Naive thymus-derived CD4-positive, alpha-beta T cell (primary cell): ENCODE measurements at regions of chr9 and their contacts with region 1.

Region 1: DNA sequence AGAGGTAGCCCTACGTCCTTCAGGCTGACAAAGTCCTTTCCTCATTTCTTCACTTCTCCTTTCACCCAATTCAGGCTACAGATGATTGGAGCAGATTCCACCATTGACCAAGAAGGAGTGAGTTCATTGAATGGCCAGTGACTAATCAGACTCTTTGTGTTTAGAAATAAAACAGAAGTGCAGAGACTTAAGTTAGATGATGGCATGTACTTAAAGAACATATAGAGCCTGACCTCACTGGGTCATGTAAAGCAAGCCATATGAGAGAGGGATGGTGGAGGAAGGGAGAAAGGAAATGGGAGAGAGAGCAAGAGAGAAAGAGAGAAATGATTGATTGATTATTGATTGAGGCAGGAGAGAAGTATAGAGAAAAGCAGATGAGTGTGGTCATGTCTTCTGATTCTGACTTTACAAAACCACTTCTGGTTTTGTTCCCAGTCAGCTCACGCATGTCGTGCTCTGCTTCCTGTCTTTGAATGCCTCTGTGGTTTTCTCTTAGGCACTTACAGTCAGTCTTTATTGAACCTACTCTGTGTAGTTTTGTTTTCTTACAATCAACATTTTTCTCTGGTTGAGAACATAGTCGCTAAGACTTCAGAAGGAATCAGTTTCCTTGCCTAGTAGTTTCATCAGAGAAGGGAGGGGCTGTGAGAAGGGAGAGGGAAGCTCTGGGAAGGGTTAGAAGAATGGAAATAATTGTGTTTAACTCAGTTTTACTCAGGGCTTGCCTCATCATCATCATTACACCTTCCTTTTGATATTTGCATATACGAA is 149.2 kb upstream of the KLF9 start:
- DNase-seq: peak in 8 of 9 donors; percentile 45 to 86 (median 78)
- ATAC-seq: peak; percentile 93
- H3K4me3 ChIP-seq: peak overlapping the region; percentile 15
- H3K4me3 Mint-ChIP-seq: peak overlapping the region; percentile 45 to 85 (median 68)
- H3K27ac ChIP-seq: peak overlapping the region; percentile 67
- H3K27ac Mint-ChIP-seq: peak overlapping the region; percentile 85 to 98 (median 95)
- H3K4me1 ChIP-seq: peaks cover 17 to 34% of the 10 kb centered on the region in 2 donors
- H3K4me1 Mint-ChIP-seq: peaks cover 33 to 66% (median 53%) of the 10 kb centered on the region in 7 donors
- H3K27me3 ChIP-seq: no peaks in the 10 kb centered on the region
- H3K27me3 Mint-ChIP-seq: no peaks in the 10 kb centered on the region

Region 2: GRCh38 chr9:70340572-70340971 is 223.0 kb before region 1 on chr9:
- CTCF ChIA-PET with region 1: interaction called, 3 read pairs
- POLR2A ChIA-PET with region 1: interaction called, 3 read pairs
- intact Hi-C with region 1: loop called (anchors 1 kb)
- DNase-seq: peak in 5 of 9 donors; percentile 8 to 36 (median 24)
- ATAC-seq: no peak
- H3K4me3 ChIP-seq: no peak overlapping the region
- H3K4me3 Mint-ChIP-seq: no peak overlapping the region
- H3K27ac ChIP-seq: no peak overlapping the region
- H3K27ac Mint-ChIP-seq: no peak overlapping the region
- H3K4me1 ChIP-seq: no peaks in the 10 kb centered on the region
- H3K4me1 Mint-ChIP-seq: peaks cover 0 to 12% (median 4%) of the 10 kb centered on the region in 7 donors
- H3K27me3 ChIP-seq: no peaks in the 10 kb centered on the region
- H3K27me3 Mint-ChIP-seq: no peaks in the 10 kb centered on the region

Region 3: GRCh38 chr9:70419546-70420266 is 143.9 kb before region 1 on chr9:
- CTCF ChIA-PET with region 1: interaction called, 3 read pairs
- POLR2A ChIA-PET with region 1: interaction called, 45 read pairs
- intact Hi-C with region 1: loop called (anchors 1 kb)
- DNase-seq: peak; percentile 69 to 92 (median 83)
- ATAC-seq: peak; percentile 69
- H3K4me3 ChIP-seq: peak overlapping the region; percentile 69
- H3K4me3 Mint-ChIP-seq: peak overlapping the region; percentile 87 to 99 (median 95)
- H3K27ac ChIP-seq: peak overlapping the region; percentile 92
- H3K27ac Mint-ChIP-seq: peak overlapping the region; percentile 75 to 100 (median 99)
- H3K4me1 ChIP-seq: peaks cover 38 to 43% of the 10 kb centered on the region in 2 donors
- H3K4me1 Mint-ChIP-seq: peaks cover 22 to 66% (median 42%) of the 10 kb centered on the region in 7 donors
- H3K27me3 ChIP-seq: no peaks in the 10 kb centered on the region
- H3K27me3 Mint-ChIP-seq: peaks cover 0 to 2% (median 0%) of the 10 kb centered on the region in 5 donors

Region 4: DNA sequence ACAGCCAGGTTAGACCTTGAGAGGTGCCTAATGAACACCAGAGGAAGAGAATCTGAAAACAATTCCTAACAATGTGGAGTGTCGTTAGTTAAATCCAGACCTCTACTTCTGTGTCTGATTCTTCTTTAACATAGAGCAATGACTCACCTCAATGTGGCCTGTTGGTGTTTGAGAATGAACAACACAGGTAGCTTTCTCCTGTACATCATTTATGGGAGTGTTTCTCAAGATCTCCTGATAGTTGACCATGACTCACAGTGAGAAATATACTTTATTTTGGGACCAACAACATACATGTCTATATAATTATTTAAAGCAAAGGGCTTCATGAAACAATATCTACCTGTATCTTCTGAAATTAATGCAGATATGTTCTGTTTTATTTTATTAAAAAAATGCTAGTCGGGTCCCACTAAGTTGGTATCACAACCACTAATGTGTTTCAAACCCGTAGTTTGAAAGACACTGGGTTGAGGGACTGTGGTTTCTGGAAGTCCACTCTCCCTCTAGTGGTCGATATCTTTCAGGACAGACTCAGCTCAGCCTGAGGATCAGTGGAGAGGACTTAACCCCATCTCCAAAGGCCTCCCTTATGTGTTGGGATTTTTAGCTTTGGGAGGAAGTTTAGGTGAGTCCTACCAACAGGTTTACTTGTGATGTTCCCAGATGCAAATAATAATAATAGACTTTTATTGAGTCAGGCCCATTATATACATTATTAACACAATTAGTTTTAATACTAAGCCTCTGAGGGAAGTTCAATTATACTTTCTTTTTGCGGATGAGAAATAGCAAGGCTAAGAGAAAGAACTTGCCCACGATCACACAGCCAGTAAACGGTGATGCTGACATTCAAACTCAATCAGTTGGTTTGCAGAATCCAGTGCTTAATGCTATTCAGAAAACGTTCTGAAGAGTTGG is 79.1 kb before region 1 on chr9:
- CTCF ChIA-PET with region 1: no interaction called
- POLR2A ChIA-PET with region 1: no interaction called
- intact Hi-C with region 1: loop called in 1 of 2 experiments (anchors 2 kb)
- DNase-seq: peak in 6 of 9 donors; percentile 13 to 38 (median 32)
- ATAC-seq: peak; percentile 85
- H3K4me3 ChIP-seq: no peak overlapping the region
- H3K4me3 Mint-ChIP-seq: no peak overlapping the region
- H3K27ac ChIP-seq: no peak overlapping the region
- H3K27ac Mint-ChIP-seq: peak overlapping the region in 1 of 9 donors; percentile 36
- H3K4me1 ChIP-seq: no peaks in the 10 kb centered on the region
- H3K4me1 Mint-ChIP-seq: peaks cover 4 to 26% (median 13%) of the 10 kb centered on the region in 7 donors
- H3K27me3 ChIP-seq: no peaks in the 10 kb centered on the region
- H3K27me3 Mint-ChIP-seq: peaks cover 0 to 10% (median 0%) of the 10 kb centered on the region in 5 donors

Region 5: DNA sequence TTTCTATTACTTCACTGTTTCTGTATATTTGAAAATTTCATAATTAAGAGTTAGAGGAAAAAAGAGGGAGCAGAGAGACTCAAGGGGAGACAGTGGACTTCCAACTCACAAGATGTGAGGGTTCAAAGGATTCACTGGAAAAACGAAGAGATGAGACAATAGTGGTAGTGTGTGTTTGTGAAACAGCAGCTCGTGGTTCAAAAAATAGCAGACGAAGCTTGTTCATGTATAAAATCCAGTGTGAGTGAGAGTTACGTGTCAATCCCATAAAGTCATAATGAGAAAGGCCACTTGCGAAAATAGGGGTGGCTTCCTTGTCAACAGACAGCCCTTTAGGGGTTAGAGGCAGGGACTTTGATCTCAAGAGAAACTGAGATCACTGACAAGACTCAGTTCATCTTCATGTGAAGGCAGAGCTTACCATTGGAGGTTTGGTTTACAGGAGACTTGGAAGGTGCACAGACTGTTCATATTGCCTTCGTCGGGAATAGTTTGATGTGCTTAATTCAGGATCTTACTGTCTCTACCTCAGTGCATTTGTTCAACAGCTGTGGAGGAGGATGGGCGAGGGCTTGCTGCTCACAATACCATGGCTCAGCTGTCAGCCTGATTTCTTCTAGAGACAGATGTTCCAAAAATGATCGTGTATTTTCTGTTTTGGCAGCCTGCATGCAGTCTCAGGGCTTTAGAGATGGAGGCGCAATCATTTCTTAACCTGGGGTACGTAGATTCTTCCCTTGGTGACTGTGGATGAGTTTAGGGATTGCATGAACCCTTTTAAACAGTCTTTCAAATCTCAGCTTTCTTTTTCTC is 43.5 kb before region 1 on chr9:
- CTCF ChIA-PET with region 1: no interaction called
- POLR2A ChIA-PET with region 1: interaction called, 3 read pairs
- intact Hi-C with region 1: loop called in 1 of 2 experiments (anchors 2 kb)
- DNase-seq: no peak
- ATAC-seq: no peak
- H3K4me3 ChIP-seq: no peak overlapping the region
- H3K4me3 Mint-ChIP-seq: peak overlapping the region in 1 of 10 donors; percentile 68
- H3K27ac ChIP-seq: no peak overlapping the region
- H3K27ac Mint-ChIP-seq: peak overlapping the region in 3 of 9 donors; percentile 11 to 75 (median 20)
- H3K4me1 ChIP-seq: no peaks in the 10 kb centered on the region
- H3K4me1 Mint-ChIP-seq: peaks cover 0 to 23% (median 0%) of the 10 kb centered on the region in 7 donors
- H3K27me3 ChIP-seq: no peaks in the 10 kb centered on the region
- H3K27me3 Mint-ChIP-seq: no peaks in the 10 kb centered on the region

Region 6: GRCh38 chr9:70531311-70531710 is 32.3 kb before region 1 on chr9:
- CTCF ChIA-PET with region 1: no interaction called
- POLR2A ChIA-PET with region 1: no interaction called
- intact Hi-C with region 1: loop called in 1 of 2 experiments (anchors 2 kb)
- DNase-seq: no peak
- ATAC-seq: no peak
- H3K4me3 ChIP-seq: no peak overlapping the region
- H3K4me3 Mint-ChIP-seq: no peak overlapping the region
- H3K27ac ChIP-seq: no peak overlapping the region
- H3K27ac Mint-ChIP-seq: no peak overlapping the region
- H3K4me1 ChIP-seq: peaks cover 0 to 9% of the 10 kb centered on the region in 2 donors
- H3K4me1 Mint-ChIP-seq: peaks cover 6 to 21% (median 12%) of the 10 kb centered on the region in 7 donors
- H3K27me3 ChIP-seq: no peaks in the 10 kb centered on the region
- H3K27me3 Mint-ChIP-seq: no peaks in the 10 kb centered on the region

Region 7: GRCh38 chr9:71897577-71897976 is 1334.0 kb after region 1 on chr9:
- CTCF ChIA-PET with region 1: no interaction called
- POLR2A ChIA-PET with region 1: no interaction called
- intact Hi-C with region 1: loop called in 1 of 2 experiments (anchors 10 kb)
- DNase-seq: peak in 7 of 9 donors; percentile 17 to 53 (median 40)
- ATAC-seq: peak; percentile 80
- H3K4me3 ChIP-seq: no peak overlapping the region
- H3K4me3 Mint-ChIP-seq: peak overlapping the region in 8 of 10 donors; percentile 42 to 68 (median 60)
- H3K27ac ChIP-seq: no peak overlapping the region
- H3K27ac Mint-ChIP-seq: peak overlapping the region in 6 of 9 donors; percentile 15 to 83 (median 70)
- H3K4me1 ChIP-seq: peaks cover 36 to 37% of the 10 kb centered on the region in 2 donors
- H3K4me1 Mint-ChIP-seq: peaks cover 61 to 91% (median 79%) of the 10 kb centered on the region in 7 donors
- H3K27me3 ChIP-seq: no peaks in the 10 kb centered on the region
- H3K27me3 Mint-ChIP-seq: no peaks in the 10 kb centered on the region